ENCODE measurements at regions of chr20 and their contacts with region 1.

Region 1: DNA sequence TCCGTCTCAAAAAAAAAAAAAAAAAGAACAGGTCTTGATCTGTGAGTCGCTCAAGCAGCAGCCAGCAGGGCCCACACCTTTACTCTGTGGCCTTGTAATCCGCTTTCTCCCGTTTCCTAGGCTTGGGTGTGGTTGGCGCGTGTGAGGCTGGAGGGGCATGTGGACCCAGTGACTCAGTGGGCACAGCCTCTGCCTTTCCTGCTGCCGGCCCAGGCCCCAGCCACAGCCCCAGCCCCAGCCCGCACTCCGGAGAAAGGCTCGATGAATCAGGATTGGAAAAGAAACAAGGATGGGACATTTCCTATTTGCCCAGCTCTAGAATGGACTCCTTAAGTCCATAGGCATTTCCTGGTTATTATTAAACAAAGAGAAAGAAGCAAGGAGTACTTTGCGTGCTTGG is 4.3 kb downstream of the BHLHE23 start:
- DNase-seq: no peak
- H3K4me3 Mint-ChIP-seq: no peak overlapping the region
- H3K27ac Mint-ChIP-seq: no peak overlapping the region
- H3K4me1 Mint-ChIP-seq: peaks cover 8% of the 10 kb centered on the region
- H3K27me3 Mint-ChIP-seq: peaks cover 55% of the 10 kb centered on the region

Region 2: DNA sequence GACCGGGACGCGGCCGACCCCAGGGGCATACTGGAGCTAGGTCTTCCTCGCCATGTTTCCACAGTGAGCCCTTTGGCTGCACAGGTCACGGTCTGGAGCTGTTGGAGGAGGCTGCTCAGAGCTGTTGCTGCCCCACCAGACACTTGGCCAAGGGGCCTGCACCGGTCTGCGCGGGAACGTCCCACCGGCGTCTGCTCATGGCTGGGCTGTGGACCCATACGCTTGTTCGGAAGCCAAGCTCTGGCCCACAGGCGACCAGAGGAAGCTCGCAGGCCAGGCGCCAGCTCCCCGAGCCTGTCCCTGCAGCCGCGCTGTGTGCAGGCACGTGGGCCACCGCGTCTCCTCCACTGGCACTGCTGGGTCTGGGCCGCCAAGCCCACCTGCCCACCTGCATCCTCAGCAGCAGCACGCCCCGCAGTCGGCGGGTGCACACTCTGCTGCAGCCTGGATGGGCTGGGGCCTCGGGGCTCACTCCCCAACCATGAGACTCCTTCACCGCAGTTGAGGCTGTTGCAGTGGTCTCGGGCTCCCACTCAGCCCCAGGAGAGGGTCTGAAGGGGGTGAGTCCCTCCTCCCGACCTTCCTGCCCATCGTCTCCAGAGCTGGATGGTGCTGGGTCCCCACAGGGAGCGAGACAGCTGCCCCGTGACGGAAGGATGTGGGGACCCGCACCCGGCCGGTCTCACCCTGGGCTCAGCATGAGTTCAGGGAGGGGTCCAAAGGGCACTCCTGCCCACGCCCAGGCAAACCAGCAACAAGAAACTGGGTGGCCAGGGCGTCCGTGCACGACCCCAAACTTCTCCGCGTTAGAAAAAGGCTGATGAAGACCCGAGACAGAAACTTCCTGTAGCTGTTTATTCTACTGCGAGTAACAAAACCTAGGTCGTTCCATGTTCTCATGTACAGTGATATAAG is 125.4 kb before region 1 on chr20:
- CTCF ChIA-PET with region 1: no interaction called
- POLR2A ChIA-PET with region 1: no interaction called
- intact Hi-C with region 1: no loop called
- DNase-seq: no peak
- H3K4me3 Mint-ChIP-seq: no peak overlapping the region
- H3K27ac Mint-ChIP-seq: no peak overlapping the region
- H3K4me1 Mint-ChIP-seq: peaks cover 12% of the 10 kb centered on the region
- H3K27me3 Mint-ChIP-seq: no peaks in the 10 kb centered on the region

Region 3: DNA sequence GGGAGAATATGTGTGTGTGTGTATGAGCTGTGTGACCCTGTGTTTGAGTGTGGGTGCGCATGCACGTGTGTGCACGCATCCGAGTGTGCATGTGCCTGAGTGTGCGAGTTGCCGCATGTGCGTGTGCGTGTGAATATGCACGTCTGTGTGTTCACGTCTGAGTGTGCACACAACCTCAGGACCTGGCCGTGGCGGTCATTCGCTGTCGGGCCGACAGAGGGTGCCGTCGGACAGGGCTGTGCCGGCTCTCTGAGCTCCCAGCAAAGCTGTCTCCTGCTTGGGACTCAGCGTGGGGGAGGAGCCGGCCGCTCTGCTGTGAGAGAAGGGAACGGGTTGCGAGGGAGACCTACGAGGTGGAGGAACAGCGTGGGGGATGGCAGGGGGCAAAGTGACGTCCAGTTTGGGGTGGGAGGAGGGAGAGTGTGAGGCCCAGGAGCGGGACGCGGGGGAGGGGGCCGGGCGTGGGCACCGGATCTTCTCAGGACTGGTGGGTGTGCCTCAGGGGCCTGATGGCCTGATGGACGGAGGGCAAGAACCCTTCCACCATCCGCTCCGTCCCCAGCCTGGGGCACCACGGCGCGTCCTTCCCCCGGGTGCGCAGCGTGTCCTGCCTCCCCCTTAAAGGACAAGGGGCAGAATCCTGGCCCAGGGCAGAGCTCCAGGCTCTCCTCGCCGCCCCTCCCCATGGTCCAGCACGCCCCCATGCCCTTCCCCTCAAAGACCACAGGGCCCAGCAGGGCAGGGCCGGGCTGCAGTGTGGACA is 30.1 kb before region 1 on chr20:
- CTCF ChIA-PET with region 1: interaction called, 13 read pairs
- POLR2A ChIA-PET with region 1: no interaction called
- intact Hi-C with region 1: no loop called
- DNase-seq: peak; percentile 91
- H3K4me3 Mint-ChIP-seq: peak overlapping the region; percentile 38
- H3K27ac Mint-ChIP-seq: no peak overlapping the region
- H3K4me1 Mint-ChIP-seq: peaks cover 19% of the 10 kb centered on the region
- H3K27me3 Mint-ChIP-seq: peaks cover 44% of the 10 kb centered on the region